ENCODE measurements at regions of chr6 and their contacts with region 1.

Region 1: GRCh38 chr6:75208298-75209183 is 2.7 kb upstream of the COL12A1 start:
- DNase-seq: peak; percentile 93
- H3K4me3 ChIP-seq: peak overlapping the region in 3 of 8 donors; percentile 7 to 67 (median 22)
- H3K27ac ChIP-seq: peak overlapping the region in 1 of 8 donors; percentile 26
- H3K4me1 ChIP-seq: peaks cover 29 to 60% (median 52%) of the 10 kb centered on the region in 6 donors
- H3K27me3 ChIP-seq: peaks cover 3 to 86% (median 56%) of the 10 kb centered on the region in 7 donors
- CTCF ChIP-seq: peak; percentile 68 to 87 (median 83)
- POLR2A ChIP-seq: no peak

Region 2: GRCh38 chr6:73739096-73739495 is 1469.4 kb before region 1 on chr6:
- intact Hi-C with region 1: loop called (anchors 5 kb)
- DNase-seq: no peak
- H3K4me3 ChIP-seq: no peak overlapping the region
- H3K27ac ChIP-seq: no peak overlapping the region
- H3K4me1 ChIP-seq: peaks cover 0 to 5% (median 0%) of the 10 kb centered on the region in 6 donors
- H3K27me3 ChIP-seq: no peaks in the 10 kb centered on the region
- CTCF ChIP-seq: peak; percentile 45 to 82 (median 75)
- POLR2A ChIP-seq: no peak

Region 3: GRCh38 chr6:73854998-73855718 is 1353.4 kb before region 1 on chr6:
- intact Hi-C with region 1: loop called (anchors 10 kb)
- DNase-seq: no peak
- H3K4me3 ChIP-seq: no peak overlapping the region
- H3K27ac ChIP-seq: no peak overlapping the region
- H3K4me1 ChIP-seq: peaks cover 0 to 4% (median 0%) of the 10 kb centered on the region in 6 donors
- H3K27me3 ChIP-seq: no peaks in the 10 kb centered on the region
- CTCF ChIP-seq: peak in 10 of 11 experiments; percentile 9 to 63 (median 54)
- POLR2A ChIP-seq: no peak

Region 4: GRCh38 chr6:74091136-74091793 is 1117.3 kb before region 1 on chr6:
- intact Hi-C with region 1: loop called (anchors 5 kb)
- DNase-seq: no peak
- H3K4me3 ChIP-seq: no peak overlapping the region
- H3K27ac ChIP-seq: no peak overlapping the region
- H3K4me1 ChIP-seq: no peaks in the 10 kb centered on the region
- H3K27me3 ChIP-seq: no peaks in the 10 kb centered on the region
- CTCF ChIP-seq: peak in 8 of 11 experiments; percentile 37 to 68 (median 55)
- POLR2A ChIP-seq: no peak

Region 5: GRCh38 chr6:74879234-74879633 is 329.3 kb before region 1 on chr6:
- intact Hi-C with region 1: no loop called
- DNase-seq: no peak
- H3K4me3 ChIP-seq: no peak overlapping the region
- H3K27ac ChIP-seq: no peak overlapping the region
- H3K4me1 ChIP-seq: no peaks in the 10 kb centered on the region
- H3K27me3 ChIP-seq: no peaks in the 10 kb centered on the region
- CTCF ChIP-seq: no peak
- POLR2A ChIP-seq: no peak

Measured in spleen (tissue), 13 donors.